ENCODE measurements at regions of chr6 and their contacts with region 1.

Region 1: DNA sequence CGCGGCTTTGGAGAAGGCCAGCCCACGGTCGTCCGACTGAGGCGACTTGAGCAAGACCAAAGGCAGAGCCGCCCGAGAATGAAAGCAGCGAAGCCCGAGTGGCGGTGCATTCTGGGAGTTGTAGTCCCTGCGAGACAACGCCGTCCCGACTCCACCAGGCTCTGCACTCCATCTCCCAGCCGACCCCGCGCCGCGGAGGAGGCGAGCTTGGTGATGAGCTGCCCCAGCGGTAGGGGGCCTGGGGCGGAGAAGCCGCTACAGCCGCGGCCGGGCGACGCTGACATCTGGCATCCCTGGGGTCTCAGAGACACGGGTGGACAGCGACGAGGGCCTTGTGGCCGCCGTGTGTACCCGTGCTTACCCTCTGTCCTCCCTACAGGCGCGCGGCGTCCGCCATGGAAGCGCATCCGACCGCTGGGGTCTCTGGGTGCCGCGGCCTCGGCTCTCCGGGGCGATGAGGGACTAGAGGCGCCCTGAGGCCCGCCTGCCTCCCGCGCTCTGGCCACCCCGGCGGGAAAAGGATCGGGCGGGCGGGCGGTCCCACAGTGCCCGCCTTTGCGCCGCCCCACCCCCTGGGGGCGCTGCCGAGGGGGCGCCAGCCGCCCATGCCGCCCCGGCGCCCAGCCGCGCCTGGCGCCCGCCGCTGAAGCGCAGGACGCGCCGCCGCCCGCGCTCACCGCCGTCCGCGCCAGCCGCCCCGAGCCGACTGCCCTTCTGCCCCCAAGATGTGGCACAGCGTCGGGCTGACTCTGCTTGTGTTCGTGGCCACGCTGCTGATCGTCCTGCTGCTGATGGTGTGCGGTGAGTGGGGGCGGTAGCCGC is at the start of gene SMIM13:
- DNase-seq: peak; percentile 99
- H3K4me3 ChIP-seq: peak within 1 kb of the TSS; percentile 54 to 98 (median 86)
- H3K27ac ChIP-seq: peak within 1 kb of the TSS; percentile 87
- H3K4me1 ChIP-seq: peaks cover 18% of the 10 kb centered on the region
- H3K27me3 ChIP-seq: no peaks in the 10 kb centered on the region
- CTCF ChIP-seq: peak; percentile 38 to 47
- POLR2A ChIP-seq: peak; percentile 68
- total RNA-seq, gene SMIM13: 14.7 and 19.4 TPM in 2 replicates

Region 2: GRCh38 chr6:11064836-11065235 is 29.0 kb before region 1 on chr6:
- CTCF ChIA-PET with region 1: interaction called, 12 read pairs
- POLR2A ChIA-PET with region 1: no interaction called
- dilution Hi-C with region 1: no loop called
- intact Hi-C with region 1: no loop called
- DNase-seq: no peak
- H3K4me3 ChIP-seq: no peak overlapping the region
- H3K27ac ChIP-seq: no peak overlapping the region
- H3K4me1 ChIP-seq: no peaks in the 10 kb centered on the region
- H3K27me3 ChIP-seq: peaks cover 0 to 3% of the 10 kb centered on the region in 2 experiments
- CTCF ChIP-seq: no peak
- POLR2A ChIP-seq: no peak

Region 3: GRCh38 chr6:11129908-11130565 is 36.2 kb after region 1 on chr6:
- CTCF ChIA-PET with region 1: interaction called, 3 read pairs
- POLR2A ChIA-PET with region 1: interaction called, 4 read pairs
- dilution Hi-C with region 1: no loop called
- intact Hi-C with region 1: loop called (anchors 2 kb)
- DNase-seq: no peak
- H3K4me3 ChIP-seq: no peak overlapping the region
- H3K27ac ChIP-seq: no peak overlapping the region
- H3K4me1 ChIP-seq: peaks cover 13% of the 10 kb centered on the region
- H3K27me3 ChIP-seq: no peaks in the 10 kb centered on the region
- CTCF ChIP-seq: no peak
- POLR2A ChIP-seq: no peak

Region 4: GRCh38 chr6:11218538-11219399 is 125.0 kb after region 1 on chr6:
- CTCF ChIA-PET with region 1: interaction called, 3 read pairs
- POLR2A ChIA-PET with region 1: no interaction called
- dilution Hi-C with region 1: no loop called
- intact Hi-C with region 1: loop called (anchors 5 kb)
- DNase-seq: peak; percentile 96
- H3K4me3 ChIP-seq: peak overlapping the region in 1 of 3 experiments; percentile 1
- H3K27ac ChIP-seq: peak overlapping the region; percentile 91
- H3K4me1 ChIP-seq: peaks cover 96% of the 10 kb centered on the region
- H3K27me3 ChIP-seq: no peaks in the 10 kb centered on the region
- CTCF ChIP-seq: no peak
- POLR2A ChIP-seq: peak; percentile 78

Region 5: DNA sequence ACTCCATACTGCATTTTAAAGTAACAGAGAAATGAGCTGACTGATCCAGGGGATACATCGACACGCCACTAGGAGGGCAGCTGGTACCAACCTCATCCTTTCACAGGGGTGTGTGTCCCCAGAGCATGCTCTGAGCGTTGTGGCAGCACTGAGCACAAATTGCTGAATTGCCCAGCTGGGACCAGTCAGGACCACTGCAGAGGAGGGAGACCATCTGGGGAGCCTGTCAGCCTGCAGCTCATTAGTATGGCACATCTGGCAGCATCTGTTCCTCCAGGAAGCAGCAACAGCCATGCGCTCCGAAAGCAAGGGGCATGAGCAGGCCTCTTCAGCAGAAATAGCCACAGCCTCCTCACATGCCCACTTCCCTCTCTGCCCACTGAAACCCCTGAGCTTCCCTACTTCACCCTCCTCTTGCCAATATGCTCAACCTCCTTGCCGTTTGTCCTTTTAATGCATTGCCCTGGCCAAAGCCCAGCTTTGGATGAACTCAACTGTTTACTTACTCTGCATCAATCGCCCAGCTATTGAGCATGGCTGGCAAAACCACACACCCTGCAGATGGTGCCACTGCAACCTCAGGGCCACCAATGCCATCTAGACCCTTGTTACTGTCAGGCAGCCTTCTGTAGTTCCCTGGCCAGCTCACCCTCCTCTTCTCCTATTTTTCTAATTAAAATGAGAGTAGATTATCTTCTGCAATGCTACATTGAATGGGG is 216.3 kb after region 1 on chr6:
- CTCF ChIA-PET with region 1: no interaction called
- POLR2A ChIA-PET with region 1: no interaction called
- dilution Hi-C with region 1: no loop called
- intact Hi-C with region 1: no loop called
- DNase-seq: no peak
- H3K4me3 ChIP-seq: no peak overlapping the region
- H3K27ac ChIP-seq: no peak overlapping the region
- H3K4me1 ChIP-seq: peaks cover under 1% of the 10 kb centered on the region
- H3K27me3 ChIP-seq: no peaks in the 10 kb centered on the region
- CTCF ChIP-seq: no peak
- POLR2A ChIP-seq: no peak

Region 6: DNA sequence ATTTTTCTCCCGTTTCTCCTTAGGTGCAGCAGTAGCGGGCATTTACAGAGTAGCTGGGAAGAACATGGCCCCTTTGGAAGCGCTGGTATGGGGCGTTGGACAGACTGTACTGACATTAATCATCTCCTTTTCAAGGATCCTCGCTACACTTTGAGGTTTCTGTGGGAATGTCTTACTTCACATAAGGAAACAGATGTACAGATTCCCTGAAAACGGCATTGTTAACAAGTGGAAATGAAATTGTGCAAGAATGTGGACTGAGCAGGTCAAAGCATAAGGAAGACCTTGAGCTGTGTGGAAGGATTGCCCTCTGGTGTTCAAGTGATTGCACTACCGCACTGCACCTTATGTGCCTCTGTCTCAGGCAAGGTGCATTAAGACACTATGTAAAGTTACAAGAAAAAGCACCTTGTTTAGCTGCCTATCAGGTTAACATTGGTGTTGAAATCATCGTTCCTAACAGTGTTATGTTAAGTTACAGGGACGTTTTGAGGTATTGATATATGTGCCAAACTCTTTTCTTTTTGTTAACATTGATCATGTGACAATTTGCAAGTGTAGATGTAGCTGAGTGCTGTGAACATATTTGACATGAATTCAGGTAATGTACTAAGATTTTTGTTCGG is 481.7 kb after region 1 on chr6:
- CTCF ChIA-PET with region 1: interaction called, 4 read pairs
- POLR2A ChIA-PET with region 1: no interaction called
- dilution Hi-C with region 1: no loop called
- intact Hi-C with region 1: loop called (anchors 2 kb)
- DNase-seq: peak; percentile 84
- H3K4me3 ChIP-seq: peak overlapping the region in 1 of 3 experiments; percentile 32
- H3K27ac ChIP-seq: no peak overlapping the region
- H3K4me1 ChIP-seq: peaks cover 3% of the 10 kb centered on the region
- H3K27me3 ChIP-seq: no peaks in the 10 kb centered on the region
- CTCF ChIP-seq: peak; percentile 90 to 93
- POLR2A ChIP-seq: no peak

Measured in endothelial cell of umbilical vein (primary cell).